Left cardiac atrium (tissue), 4 donors: ENCODE measurements at regions of chrX and their contacts with region 1.

Region 1: DNA sequence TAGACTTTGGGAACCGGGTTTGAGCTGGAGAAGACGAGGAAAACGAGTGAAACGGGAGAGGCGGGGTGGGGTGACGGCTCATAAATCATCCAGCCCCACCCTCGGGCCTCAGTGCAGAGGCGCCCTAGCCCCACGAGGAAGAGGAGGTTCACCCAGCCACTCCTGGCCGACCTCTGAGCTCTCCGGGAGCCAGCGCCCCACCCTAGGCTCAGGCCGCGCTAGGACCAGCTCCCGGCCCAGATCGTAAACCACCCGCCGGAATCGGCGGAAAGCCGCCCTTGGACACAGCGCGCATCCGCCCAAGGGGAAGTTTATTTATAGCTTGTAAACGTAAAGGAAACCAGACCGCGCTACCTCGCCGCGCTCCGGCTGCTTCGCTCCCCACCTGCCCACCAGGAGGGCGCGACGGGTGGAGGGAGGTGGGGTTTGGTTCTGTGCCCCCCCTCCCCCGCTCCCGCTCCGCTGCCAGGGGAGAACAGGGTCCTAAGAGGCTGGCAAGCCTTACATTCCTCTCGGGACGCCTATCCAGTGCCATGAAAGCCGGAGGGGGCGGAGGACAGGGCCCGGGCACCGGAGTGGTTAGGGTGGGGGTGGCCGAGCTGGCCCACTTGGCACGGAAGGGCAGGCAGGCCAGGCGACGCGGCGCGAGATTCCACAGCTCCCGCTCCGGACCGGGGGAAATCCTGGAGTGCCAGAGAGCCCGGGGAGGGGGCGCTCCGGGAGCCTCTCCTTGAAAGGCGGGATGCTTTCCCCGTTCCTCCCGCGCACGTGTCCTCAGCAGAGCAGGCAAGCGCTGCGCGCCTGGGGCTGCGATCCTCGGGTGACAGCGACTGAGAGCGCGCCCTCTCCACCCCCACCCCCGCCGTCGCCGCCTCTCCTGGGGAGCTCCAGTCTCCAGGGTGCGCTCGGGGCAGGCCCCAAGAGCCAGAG is 84.2 kb downstream of the BCOR start:
- DNase-seq: peak; percentile 74
- ATAC-seq: peak; percentile 46 to 62

Region 2: GRCh38 chrX:39814391-39814790 is 199.1 kb before region 1 on chrX:
- intact Hi-C with region 1: loop called in 1 of 2 experiments (anchors 5 kb)
- DNase-seq: peak; percentile 37
- ATAC-seq: peak in 1 of 2 donors; percentile 10

Region 3: GRCh38 chrX:39896951-39897740 is 116.4 kb before region 1 on chrX:
- intact Hi-C with region 1: loop called in 1 of 2 experiments (anchors 5 kb)
- DNase-seq: peak; percentile 36
- ATAC-seq: peak; percentile 53 to 81

Region 4: GRCh38 chrX:39955624-39956023 is 57.9 kb before region 1 on chrX:
- intact Hi-C with region 1: no loop called
- DNase-seq: no peak
- ATAC-seq: no peak

Region 5: DNA sequence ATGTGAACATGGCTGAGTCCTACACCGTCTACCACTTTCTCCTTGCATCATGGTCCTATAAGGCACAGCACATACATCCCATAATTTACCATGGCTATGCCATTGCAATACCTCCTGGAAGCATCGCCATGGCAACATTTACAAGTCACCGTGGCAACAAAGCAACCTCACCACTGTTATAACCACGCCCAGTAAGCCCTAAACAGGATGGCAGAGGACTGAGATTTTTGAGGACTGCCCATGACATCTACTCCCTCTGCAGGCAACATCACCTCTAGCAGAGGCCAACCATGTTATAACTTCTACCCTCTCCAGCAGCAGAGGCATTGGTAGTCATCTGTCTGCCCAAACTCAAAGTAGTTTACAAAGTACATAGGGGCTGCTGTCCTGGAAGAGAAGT is 54.5 kb after region 1 on chrX:
- intact Hi-C with region 1: loop called in 1 of 2 experiments (anchors 5 kb)
- DNase-seq: no peak
- ATAC-seq: no peak

Region 6: GRCh38 chrX:40097497-40098263 is 84.1 kb after region 1 on chrX and contains the start of gene BCOR:
- intact Hi-C with region 1: loop called in 1 of 2 experiments (anchors 5 kb)
- DNase-seq: peak; percentile 78
- ATAC-seq: peak; percentile 51 to 55
- total RNA-seq, gene BCOR: 10.8 to 21.6 TPM

Region 7: DNA sequence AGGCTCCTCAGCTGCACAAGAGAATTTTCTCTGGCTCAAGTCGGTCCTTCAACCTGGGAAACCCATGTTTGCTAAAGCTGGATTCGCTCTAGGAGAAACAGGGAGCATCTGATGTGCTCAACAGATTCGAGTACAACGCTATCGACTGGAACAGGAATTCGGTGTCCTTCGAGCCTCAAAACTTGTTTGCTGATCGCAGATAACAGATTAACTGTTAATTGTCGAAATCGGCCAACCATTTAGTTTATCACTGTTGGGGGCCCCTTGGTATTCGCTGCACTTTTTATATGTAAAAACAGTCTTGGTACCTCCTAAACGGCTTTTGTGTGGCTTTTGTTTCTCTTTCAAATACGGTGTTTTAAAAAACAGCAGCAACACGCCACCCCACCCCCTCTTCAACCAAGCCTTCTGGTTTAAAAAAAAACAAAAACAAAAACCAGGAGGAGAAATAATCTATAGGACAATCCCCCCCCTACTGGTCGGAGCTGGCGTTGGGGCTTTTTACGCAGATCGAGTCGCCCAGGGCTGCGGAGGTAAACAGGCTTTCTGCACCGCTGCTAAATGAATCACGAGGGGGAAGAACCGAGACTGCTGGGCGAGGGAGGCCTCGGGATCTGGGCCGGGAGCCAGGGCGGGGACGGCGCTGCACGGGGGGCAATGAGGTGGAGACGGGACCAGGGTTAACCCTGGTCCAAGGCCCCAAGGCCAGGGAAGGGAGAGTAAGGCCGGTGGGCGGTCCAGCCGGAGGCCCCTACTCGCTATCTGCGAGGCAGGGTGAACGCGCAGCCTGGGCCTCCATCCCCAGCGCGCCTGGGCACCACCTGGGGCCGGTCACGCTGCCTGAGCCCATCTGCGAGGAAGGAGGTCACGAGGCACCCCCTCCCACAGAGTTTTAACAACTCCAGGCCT is 155.9 kb after region 1 on chrX:
- intact Hi-C with region 1: loop called in 1 of 2 experiments (anchors 10 kb)
- DNase-seq: no peak
- ATAC-seq: peak in 1 of 2 donors; percentile 7

Region 8: GRCh38 chrX:40266490-40267333 is 253.2 kb after region 1 on chrX:
- intact Hi-C with region 1: loop called in 1 of 2 experiments (anchors 5 kb)
- DNase-seq: peak; percentile 72
- ATAC-seq: peak; percentile 88 to 91